MCF 10A (cell line): ENCODE measurements at regions of chr20 and their contacts with region 1.

Region 1: GRCh38 chr20:45798935-45799642 is 7.3 kb downstream of the DNTTIP1 start:
- DNase-seq: peak; percentile 71
- H3K4me3 Mint-ChIP-seq: no peak overlapping the region
- H3K27ac Mint-ChIP-seq: peak overlapping the region; percentile 40
- H3K4me1 Mint-ChIP-seq: peaks cover 6% of the 10 kb centered on the region
- H3K27me3 Mint-ChIP-seq: no peaks in the 10 kb centered on the region
- CTCF ChIP-seq: peak; percentile 74

Region 2: DNA sequence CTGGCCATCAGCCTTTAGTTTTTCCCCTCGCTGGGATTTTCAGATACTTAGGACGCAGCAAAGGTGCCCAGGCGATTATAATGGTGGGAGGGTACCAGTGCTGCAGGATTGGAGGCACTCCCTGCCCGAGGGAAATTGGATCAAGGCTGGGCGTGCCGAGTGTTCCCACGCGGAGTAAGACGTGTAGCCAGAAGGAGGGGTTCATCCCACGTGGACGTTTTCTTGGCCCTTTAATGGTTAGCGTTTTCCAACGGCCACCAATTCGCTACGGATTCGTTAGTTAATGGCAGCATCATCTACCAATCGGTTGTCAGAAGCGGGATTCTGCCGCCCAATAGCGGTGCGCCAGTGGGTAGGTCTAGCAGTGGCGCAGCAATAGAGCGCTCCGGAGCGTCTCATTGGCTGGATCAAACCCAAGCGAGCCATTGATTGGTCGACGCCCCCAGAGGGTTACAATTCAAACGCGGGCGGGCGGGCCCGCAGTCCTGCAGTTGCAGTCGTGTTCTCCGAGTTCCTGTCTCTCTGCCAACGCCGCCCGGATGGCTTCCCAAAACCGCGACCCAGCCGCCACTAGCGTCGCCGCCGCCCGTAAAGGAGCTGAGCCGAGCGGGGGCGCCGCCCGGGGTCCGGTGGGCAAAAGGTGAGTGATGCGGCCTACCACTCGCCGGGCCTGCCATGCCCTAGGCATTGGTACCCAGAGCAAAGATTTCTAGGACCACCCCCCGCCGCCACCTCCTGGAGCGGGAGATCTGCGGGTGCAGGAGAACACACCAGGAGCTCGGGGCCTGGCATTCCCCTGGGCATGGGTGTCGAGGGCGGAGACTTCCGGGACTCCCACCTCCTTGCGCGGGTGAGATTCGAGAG is 13.3 kb after region 1 on chr20 and contains the start of gene UBE2C:
- CTCF ChIA-PET with region 1: interaction called, 40 read pairs
- POLR2A ChIA-PET with region 1: interaction called, 5 read pairs
- intact Hi-C with region 1: no loop called
- DNase-seq: peak; percentile 99
- H3K4me3 Mint-ChIP-seq: peak within 1 kb of the TSS; percentile 85
- H3K27ac Mint-ChIP-seq: peak within 1 kb of the TSS; percentile 78
- H3K4me1 Mint-ChIP-seq: peaks cover 24% of the 10 kb centered on the region
- H3K27me3 Mint-ChIP-seq: no peaks in the 10 kb centered on the region
- CTCF ChIP-seq: no peak
- total RNA-seq, gene UBE2C: 98.4 and 107 TPM in 2 replicates

Region 3: DNA sequence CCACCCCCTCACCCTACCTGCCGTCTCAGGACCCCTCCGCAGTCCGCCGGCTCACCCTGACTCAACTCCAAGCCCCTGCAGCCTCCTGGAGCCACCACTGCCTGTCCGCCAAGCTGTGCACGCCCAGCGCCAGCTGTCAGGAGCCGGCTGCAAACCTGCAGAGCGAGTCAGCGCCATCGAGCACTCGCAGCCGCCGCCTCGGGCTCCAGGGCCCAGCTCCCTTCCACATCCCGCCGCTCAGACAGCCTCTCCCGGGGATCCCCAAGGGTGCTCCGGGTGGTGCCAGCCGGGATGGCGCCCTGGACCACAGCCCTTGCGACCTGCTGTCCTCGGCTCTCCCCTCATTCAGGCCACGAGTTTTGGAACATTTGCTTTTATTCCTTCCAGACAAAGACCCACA is 23.8 kb after region 1 on chr20:
- CTCF ChIA-PET with region 1: interaction called, 12 read pairs
- POLR2A ChIA-PET with region 1: interaction called, 3 read pairs
- intact Hi-C with region 1: no loop called
- DNase-seq: no peak
- H3K4me3 Mint-ChIP-seq: no peak overlapping the region
- H3K27ac Mint-ChIP-seq: no peak overlapping the region
- H3K4me1 Mint-ChIP-seq: peaks cover 7% of the 10 kb centered on the region
- H3K27me3 Mint-ChIP-seq: peaks cover 10% of the 10 kb centered on the region
- CTCF ChIP-seq: no peak

Region 4: GRCh38 chr20:45833030-45833882 is 34.2 kb after region 1 on chr20 and contains the start of gene SNX21:
- CTCF ChIA-PET with region 1: interaction called, 16 read pairs
- POLR2A ChIA-PET with region 1: interaction called, 3 read pairs
- intact Hi-C with region 1: no loop called
- DNase-seq: peak; percentile 83
- H3K4me3 Mint-ChIP-seq: peak within 1 kb of the TSS; percentile 80
- H3K27ac Mint-ChIP-seq: peak within 1 kb of the TSS; percentile 84
- H3K4me1 Mint-ChIP-seq: peaks cover 26% of the 10 kb centered on the region
- H3K27me3 Mint-ChIP-seq: no peaks in the 10 kb centered on the region
- CTCF ChIP-seq: no peak
- total RNA-seq, gene SNX21: 8.5 and 13.9 TPM in 2 replicates

Region 5: DNA sequence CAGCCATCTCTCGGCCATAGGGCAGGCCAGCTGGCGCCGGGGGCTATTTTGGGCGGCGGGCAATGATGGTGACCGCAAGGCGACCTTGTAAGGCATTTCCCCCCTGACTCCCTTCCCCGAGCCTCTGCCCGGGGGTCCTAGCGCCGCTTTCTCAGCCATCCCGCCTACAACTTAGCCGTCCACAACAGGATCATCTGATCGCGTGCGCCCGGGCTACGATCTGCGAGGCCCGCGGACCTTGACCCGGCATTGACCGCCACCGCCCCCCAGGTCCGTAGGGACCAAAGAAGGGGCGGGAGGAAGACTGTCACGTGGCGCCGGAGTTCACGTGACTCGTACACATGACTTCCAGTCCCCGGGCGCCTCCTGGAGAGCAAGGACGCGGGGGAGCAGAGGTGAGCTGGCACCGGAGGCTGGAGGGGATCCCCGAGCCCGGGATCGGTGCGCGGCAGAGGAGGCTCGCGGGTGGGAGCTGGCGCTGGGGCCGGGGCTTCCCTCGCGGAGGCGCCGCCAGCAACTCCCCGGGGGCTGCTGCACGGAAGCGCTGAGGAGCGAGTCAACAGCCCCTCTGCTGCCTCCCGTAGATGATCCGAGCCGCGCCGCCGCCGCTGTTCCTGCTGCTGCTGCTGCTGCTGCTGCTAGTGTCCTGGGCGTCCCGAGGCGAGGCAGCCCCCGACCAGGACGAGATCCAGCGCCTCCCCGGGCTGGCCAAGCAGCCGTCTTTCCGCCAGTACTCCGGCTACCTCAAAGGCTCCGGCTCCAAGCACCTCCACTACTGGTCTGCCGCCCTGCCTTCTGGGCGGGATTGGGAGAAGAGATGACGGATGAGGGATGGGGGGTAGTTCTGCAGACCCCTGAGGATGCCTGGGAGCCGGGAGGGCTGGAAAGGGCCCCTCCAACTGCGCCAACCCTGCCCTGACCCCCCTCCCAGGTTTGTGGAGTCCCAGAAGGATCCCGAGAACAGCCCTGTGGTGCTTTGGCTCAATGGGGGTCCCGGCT is 92.2 kb after region 1 on chr20 and contains the starts of genes CTSA and NEURL2:
- CTCF ChIA-PET with region 1: interaction called, 22 read pairs
- POLR2A ChIA-PET with region 1: no interaction called
- intact Hi-C with region 1: no loop called
- DNase-seq: peak; percentile 89
- H3K4me3 Mint-ChIP-seq: peak within 1 kb of the TSS; percentile 95
- H3K27ac Mint-ChIP-seq: peak within 1 kb of the TSS; percentile 86
- H3K4me1 Mint-ChIP-seq: peaks cover 6% of the 10 kb centered on the region
- H3K27me3 Mint-ChIP-seq: no peaks in the 10 kb centered on the region
- CTCF ChIP-seq: no peak
- total RNA-seq, gene CTSA: 25.3 and 39.1 TPM in 2 replicates
- total RNA-seq, gene NEURL2: 2.0 and 2.5 TPM in 2 replicates

Region 6: GRCh38 chr20:45957081-45957941 is 158.2 kb after region 1 on chr20:
- CTCF ChIA-PET with region 1: interaction called, 48 read pairs
- POLR2A ChIA-PET with region 1: no interaction called
- intact Hi-C with region 1: no loop called
- DNase-seq: no peak
- H3K4me3 Mint-ChIP-seq: no peak overlapping the region
- H3K27ac Mint-ChIP-seq: no peak overlapping the region
- H3K4me1 Mint-ChIP-seq: no peaks in the 10 kb centered on the region
- H3K27me3 Mint-ChIP-seq: no peaks in the 10 kb centered on the region
- CTCF ChIP-seq: no peak

Region 7: GRCh38 chr20:45963059-45964005 is 164.2 kb after region 1 on chr20:
- CTCF ChIA-PET with region 1: interaction called, 48 read pairs
- POLR2A ChIA-PET with region 1: interaction called, 3 read pairs
- intact Hi-C with region 1: no loop called
- DNase-seq: peak; percentile 63
- H3K4me3 Mint-ChIP-seq: no peak overlapping the region
- H3K27ac Mint-ChIP-seq: no peak overlapping the region
- H3K4me1 Mint-ChIP-seq: no peaks in the 10 kb centered on the region
- H3K27me3 Mint-ChIP-seq: no peaks in the 10 kb centered on the region
- CTCF ChIP-seq: peak; percentile 44

Region 8: GRCh38 chr20:46151936-46152335 is 352.8 kb after region 1 on chr20:
- CTCF ChIA-PET with region 1: no interaction called
- POLR2A ChIA-PET with region 1: no interaction called
- intact Hi-C with region 1: no loop called
- DNase-seq: no peak
- H3K4me3 Mint-ChIP-seq: no peak overlapping the region
- H3K27ac Mint-ChIP-seq: no peak overlapping the region
- H3K4me1 Mint-ChIP-seq: no peaks in the 10 kb centered on the region
- H3K27me3 Mint-ChIP-seq: peaks cover 18% of the 10 kb centered on the region
- CTCF ChIP-seq: peak; percentile 27